SK-N-SH (cell line): ENCODE measurements at regions of chr18 and their contacts with region 1.

Region 1: DNA sequence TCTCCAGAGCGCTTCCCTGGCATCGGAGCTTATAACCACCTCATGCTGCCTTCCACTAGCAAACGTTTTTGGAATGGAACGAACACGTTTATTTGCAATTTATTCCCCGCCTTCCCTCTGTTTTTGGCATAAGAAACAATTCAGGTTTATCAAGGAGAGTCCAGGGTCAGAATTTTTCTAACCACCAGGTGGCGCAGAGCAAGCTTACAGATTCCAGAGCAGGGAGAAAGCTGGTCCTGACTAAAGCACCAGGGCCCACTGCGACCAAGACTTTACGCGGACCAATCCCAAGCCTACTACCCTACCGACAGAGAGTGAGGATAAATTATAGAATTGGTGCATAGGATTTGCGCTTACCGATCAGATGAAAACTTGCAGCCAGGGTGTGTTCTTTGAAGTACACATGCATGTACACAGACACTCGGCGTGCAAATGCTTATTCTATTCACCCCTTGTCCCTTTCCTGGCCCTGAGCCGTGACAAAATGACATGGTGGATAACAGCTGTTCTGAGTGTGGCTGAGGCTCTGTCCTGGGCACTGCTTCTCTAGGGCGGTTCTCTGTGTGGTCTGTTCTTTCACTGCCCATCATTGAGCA is 34.7 kb downstream of the NAPG start:
- DNase-seq: peak; percentile 74
- H3K4me3 ChIP-seq: no peak overlapping the region; a peak in 2 of 4 replicates
- H3K27ac ChIP-seq: no peak overlapping the region
- H3K4me1 ChIP-seq: peaks cover 0 to 5% of the 10 kb centered on the region in 2 experiments; a peak in 1 of 4 replicates
- H3K27me3 ChIP-seq: no peaks in the 10 kb centered on the region
- CTCF ChIP-seq: peak; percentile 81
- EP300 ChIP-seq: no peak
- RAD21 ChIP-seq: peak; percentile 63

Region 2: GRCh38 chr18:10536280-10536679 is 24.3 kb before region 1 on chr18:
- CTCF ChIA-PET with region 1: interaction called, 19 read pairs
- POLR2A ChIA-PET with region 1: no interaction called
- DNase-seq: no peak
- H3K4me3 ChIP-seq: no peak overlapping the region
- H3K27ac ChIP-seq: no peak overlapping the region
- H3K4me1 ChIP-seq: no peaks in the 10 kb centered on the region
- H3K27me3 ChIP-seq: no peaks in the 10 kb centered on the region
- CTCF ChIP-seq: no peak
- EP300 ChIP-seq: no peak
- RAD21 ChIP-seq: no peak

Region 3: GRCh38 chr18:10546557-10547300 is 13.8 kb before region 1 on chr18:
- CTCF ChIA-PET with region 1: interaction called, 24 read pairs
- POLR2A ChIA-PET with region 1: no interaction called
- DNase-seq: no peak
- H3K4me3 ChIP-seq: no peak overlapping the region
- H3K27ac ChIP-seq: no peak overlapping the region
- H3K4me1 ChIP-seq: no peaks in the 10 kb centered on the region; a peak in 1 of 4 replicates
- H3K27me3 ChIP-seq: no peaks in the 10 kb centered on the region
- CTCF ChIP-seq: no peak
- EP300 ChIP-seq: no peak
- RAD21 ChIP-seq: no peak

Region 4: GRCh38 chr18:10571537-10571936 is 11.0 kb after region 1 on chr18:
- CTCF ChIA-PET with region 1: interaction called, 46 read pairs
- POLR2A ChIA-PET with region 1: no interaction called
- DNase-seq: no peak
- H3K4me3 ChIP-seq: no peak overlapping the region
- H3K27ac ChIP-seq: no peak overlapping the region
- H3K4me1 ChIP-seq: no peaks in the 10 kb centered on the region
- H3K27me3 ChIP-seq: no peaks in the 10 kb centered on the region
- CTCF ChIP-seq: no peak
- EP300 ChIP-seq: no peak
- RAD21 ChIP-seq: no peak